Panc1 (cell line): ENCODE measurements at regions of chr1 and their contacts with region 1.

Region 1: DNA sequence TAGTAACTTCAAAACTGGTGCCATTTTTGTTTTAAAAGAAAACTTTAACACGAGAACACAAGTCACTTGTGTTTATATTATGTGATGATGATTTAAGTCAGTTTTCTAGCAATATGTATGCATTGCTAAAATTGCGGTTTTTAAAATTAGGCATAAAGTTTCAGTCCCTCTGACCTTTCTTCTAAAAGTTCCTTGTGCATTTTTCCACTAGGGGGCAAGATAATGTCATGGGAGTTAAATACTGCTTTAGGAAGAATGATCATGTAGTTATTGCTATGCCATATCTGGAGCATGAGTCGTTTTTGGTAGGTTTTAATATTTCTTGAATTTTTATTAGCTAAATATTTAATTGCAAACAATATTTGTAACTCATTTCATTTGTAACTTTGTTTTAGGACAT is 10.7 kb downstream of the CDC7 start:
- DNase-seq: no peak
- ATAC-seq: 0 out of 2 replicates have a peak, but pooled peaks have one; percentile 77
- H3K4me3 ChIP-seq: no peak overlapping the region
- H3K27ac ChIP-seq: no peak overlapping the region
- H3K4me1 ChIP-seq: no peaks in the 10 kb centered on the region
- H3K27me3 ChIP-seq: no peaks in the 10 kb centered on the region
- CTCF ChIP-seq: peak; percentile 73; the same call in 1 of the 2 replicates

Region 2: DNA sequence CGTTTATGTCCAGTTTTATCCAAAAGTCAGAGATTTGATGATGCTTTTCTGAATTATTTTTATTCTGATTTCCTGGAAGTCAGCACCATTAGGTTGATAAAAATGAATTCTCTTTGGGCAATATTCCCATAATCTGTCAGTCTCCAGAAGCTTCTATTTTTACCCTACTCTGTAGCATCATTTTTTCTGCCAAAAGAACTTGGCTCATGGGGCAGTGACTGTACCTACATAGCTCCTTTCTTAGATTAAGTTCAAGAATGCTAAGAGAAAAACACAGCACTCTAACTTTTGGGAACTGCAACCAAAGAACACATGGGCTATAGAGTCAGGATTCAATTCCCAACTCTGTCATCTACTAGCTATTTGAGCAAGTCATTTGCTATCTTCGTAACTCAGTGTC is 947.2 kb before region 1 on chr1:
- CTCF ChIA-PET with region 1: interaction called, 11 read pairs
- POLR2A ChIA-PET with region 1: no interaction called
- in situ Hi-C with region 1: no loop called
- intact Hi-C with region 1: no loop called
- DNase-seq: no peak
- ATAC-seq: no peak
- H3K4me3 ChIP-seq: no peak overlapping the region
- H3K27ac ChIP-seq: no peak overlapping the region
- H3K4me1 ChIP-seq: no peaks in the 10 kb centered on the region
- H3K27me3 ChIP-seq: peaks cover 6% of the 10 kb centered on the region; the same call in 1 of the 2 replicates
- CTCF ChIP-seq: no peak

Region 3: DNA sequence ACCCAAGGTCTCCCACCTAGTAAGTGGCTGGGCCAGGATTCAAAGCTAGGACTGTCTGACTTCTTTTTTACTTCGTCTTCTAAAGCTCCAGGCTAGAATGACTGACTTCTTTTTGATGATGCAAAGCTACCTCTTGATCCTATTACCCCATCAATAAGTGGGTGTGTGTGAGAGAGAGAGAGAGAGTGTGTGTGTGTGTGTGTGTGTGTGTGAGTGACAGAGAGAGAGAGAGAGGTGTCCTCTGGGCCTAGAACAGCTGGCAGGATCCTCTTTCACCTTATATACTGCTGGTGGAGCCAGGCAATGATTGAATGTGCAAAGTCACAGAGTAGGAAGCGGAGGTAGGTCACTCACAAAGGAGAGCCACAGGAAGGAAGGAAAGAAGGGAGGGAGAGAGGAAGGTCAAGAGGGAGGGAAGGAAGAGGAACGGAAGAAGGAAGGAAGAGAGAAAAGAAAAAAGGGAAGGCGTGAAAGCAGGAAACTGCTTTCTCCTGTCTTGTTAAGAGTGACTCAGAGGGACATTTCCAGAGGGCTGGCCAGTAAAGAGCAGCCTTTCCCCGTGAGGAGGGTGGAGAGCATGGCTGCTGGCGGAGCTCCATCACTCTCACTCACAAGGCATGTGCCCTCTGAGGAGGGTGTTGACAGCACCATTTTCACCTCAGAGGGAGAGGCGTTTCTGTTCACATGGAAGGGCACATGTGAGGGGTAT is 58.2 kb after region 1 on chr1:
- CTCF ChIA-PET with region 1: no interaction called
- POLR2A ChIA-PET with region 1: no interaction called
- in situ Hi-C with region 1: no loop called
- intact Hi-C with region 1: loop called (anchors 10 kb)
- DNase-seq: no peak
- ATAC-seq: peak; percentile 86
- H3K4me3 ChIP-seq: no peak overlapping the region
- H3K27ac ChIP-seq: peak overlapping the region; percentile 55
- H3K4me1 ChIP-seq: peaks cover 6% of the 10 kb centered on the region; the same call in 1 of the 2 replicates
- H3K27me3 ChIP-seq: no peaks in the 10 kb centered on the region
- CTCF ChIP-seq: no peak

Region 4: DNA sequence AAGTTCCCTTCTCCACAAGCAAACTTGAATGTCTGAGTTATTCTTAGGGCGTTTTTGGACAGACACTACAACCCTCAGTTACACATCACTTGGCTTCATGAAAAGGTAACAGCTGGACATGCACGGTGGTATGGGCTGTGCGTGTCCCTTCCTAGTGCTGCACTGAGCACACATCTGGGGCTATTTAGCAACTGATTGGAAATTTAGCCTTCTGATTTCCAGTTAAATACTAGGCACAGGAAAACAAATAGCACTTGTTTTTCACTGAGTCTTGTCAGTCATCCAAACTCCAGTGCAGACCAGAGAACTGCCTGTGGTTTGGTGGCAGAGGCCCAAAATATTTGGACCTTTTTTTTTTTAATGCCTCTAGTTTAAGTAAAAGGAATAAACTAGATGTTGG is 239.9 kb after region 1 on chr1:
- CTCF ChIA-PET with region 1: no interaction called
- POLR2A ChIA-PET with region 1: no interaction called
- in situ Hi-C with region 1: no loop called
- intact Hi-C with region 1: no loop called
- DNase-seq: no peak
- ATAC-seq: no peak
- H3K4me3 ChIP-seq: no peak overlapping the region
- H3K27ac ChIP-seq: peak overlapping the region; percentile 29; the same call in 1 of the 2 replicates
- H3K4me1 ChIP-seq: peaks cover 12% of the 10 kb centered on the region; the same call in 1 of the 2 replicates
- H3K27me3 ChIP-seq: no peaks in the 10 kb centered on the region
- CTCF ChIP-seq: no peak

Region 5: DNA sequence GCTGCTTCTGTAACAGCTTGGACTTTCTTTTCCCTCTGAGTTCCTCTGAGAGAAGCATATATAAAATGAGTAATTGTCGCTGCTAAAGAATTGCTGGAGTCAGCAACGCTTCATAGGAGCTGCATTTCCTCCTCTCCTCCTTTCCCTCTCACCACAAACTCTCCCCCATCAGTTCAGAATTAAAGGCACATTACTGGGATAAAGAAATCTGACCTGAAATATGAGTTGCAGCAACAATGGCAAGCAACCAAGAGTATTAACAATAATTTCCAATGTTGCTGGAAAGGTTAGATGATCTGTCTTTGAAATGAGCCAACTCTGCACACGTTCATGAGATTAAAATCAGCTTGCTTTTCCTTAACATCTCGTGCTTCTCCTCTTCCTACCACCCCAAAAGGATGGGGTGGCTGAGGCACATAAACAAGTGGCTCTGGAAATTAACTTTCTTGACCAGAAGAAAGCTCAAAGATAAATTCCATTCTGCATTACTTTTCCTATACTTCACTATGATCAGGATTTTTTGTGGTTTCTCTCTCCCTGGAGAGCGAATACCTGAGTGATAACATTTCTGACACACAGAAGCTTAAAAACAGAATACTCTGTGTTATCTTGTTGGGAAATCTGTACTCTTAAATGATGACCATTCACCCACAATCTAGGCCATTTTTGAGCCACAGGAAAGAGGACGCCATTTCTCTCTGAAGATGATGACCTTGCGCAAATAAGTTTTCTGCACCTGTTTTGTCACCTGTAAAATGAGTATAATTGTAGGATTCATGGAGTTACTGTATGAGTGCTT is 284.4 kb after region 1 on chr1:
- CTCF ChIA-PET with region 1: interaction called, 14 read pairs
- POLR2A ChIA-PET with region 1: no interaction called
- in situ Hi-C with region 1: no loop called
- intact Hi-C with region 1: no loop called
- DNase-seq: no peak
- ATAC-seq: no peak
- H3K4me3 ChIP-seq: no peak overlapping the region
- H3K27ac ChIP-seq: no peak overlapping the region; the same call in 1 of the 2 replicates
- H3K4me1 ChIP-seq: peaks cover 13% of the 10 kb centered on the region
- H3K27me3 ChIP-seq: no peaks in the 10 kb centered on the region
- CTCF ChIP-seq: no peak

Region 6: GRCh38 chr1:91924146-91924545 is 412.8 kb after region 1 on chr1:
- CTCF ChIA-PET with region 1: no interaction called
- POLR2A ChIA-PET with region 1: no interaction called
- in situ Hi-C with region 1: no loop called
- intact Hi-C with region 1: loop called (anchors 2 kb)
- DNase-seq: no peak
- ATAC-seq: no peak
- H3K4me3 ChIP-seq: no peak overlapping the region
- H3K27ac ChIP-seq: no peak overlapping the region
- H3K4me1 ChIP-seq: no peaks in the 10 kb centered on the region
- H3K27me3 ChIP-seq: no peaks in the 10 kb centered on the region
- CTCF ChIP-seq: no peak

Region 7: GRCh38 chr1:92016720-92017316 is 505.4 kb after region 1 on chr1:
- CTCF ChIA-PET with region 1: no interaction called
- POLR2A ChIA-PET with region 1: no interaction called
- in situ Hi-C with region 1: no loop called
- intact Hi-C with region 1: no loop called
- DNase-seq: no peak
- ATAC-seq: no peak
- H3K4me3 ChIP-seq: no peak overlapping the region
- H3K27ac ChIP-seq: no peak overlapping the region
- H3K4me1 ChIP-seq: no peaks in the 10 kb centered on the region
- H3K27me3 ChIP-seq: no peaks in the 10 kb centered on the region
- CTCF ChIP-seq: no peak